Stomach (tissue), 19 donors: ENCODE measurements at regions of chr1 and their contacts with region 1.

Region 1: GRCh38 chr1:181189691-181190363 is 101.3 kb downstream of the IER5 start:
- DNase-seq: peak; percentile 82 to 90
- H3K4me3 ChIP-seq: peak overlapping the region; percentile 19 to 45 (median 32)
- H3K27ac ChIP-seq: no peak overlapping the region
- H3K4me1 ChIP-seq: peaks cover 8 to 11% (median 11%) of the 10 kb centered on the region in 4 donors
- H3K27me3 ChIP-seq: peaks cover 0 to 38% (median 0%) of the 10 kb centered on the region in 3 donors
- CTCF ChIP-seq: peak in 5 of 7 experiments; percentile 81 to 99 (median 98)
- EP300 ChIP-seq: no peak
- POLR2A ChIP-seq: no peak

Region 2: GRCh38 chr1:180994262-180994661 is 195.6 kb before region 1 on chr1:
- intact Hi-C with region 1: no loop called
- DNase-seq: no peak
- H3K4me3 ChIP-seq: no peak overlapping the region
- H3K27ac ChIP-seq: no peak overlapping the region
- H3K4me1 ChIP-seq: peaks cover 0 to 6% (median 3%) of the 10 kb centered on the region in 4 donors
- H3K27me3 ChIP-seq: no peaks in the 10 kb centered on the region
- CTCF ChIP-seq: no peak
- EP300 ChIP-seq: no peak
- POLR2A ChIP-seq: no peak

Region 3: DNA sequence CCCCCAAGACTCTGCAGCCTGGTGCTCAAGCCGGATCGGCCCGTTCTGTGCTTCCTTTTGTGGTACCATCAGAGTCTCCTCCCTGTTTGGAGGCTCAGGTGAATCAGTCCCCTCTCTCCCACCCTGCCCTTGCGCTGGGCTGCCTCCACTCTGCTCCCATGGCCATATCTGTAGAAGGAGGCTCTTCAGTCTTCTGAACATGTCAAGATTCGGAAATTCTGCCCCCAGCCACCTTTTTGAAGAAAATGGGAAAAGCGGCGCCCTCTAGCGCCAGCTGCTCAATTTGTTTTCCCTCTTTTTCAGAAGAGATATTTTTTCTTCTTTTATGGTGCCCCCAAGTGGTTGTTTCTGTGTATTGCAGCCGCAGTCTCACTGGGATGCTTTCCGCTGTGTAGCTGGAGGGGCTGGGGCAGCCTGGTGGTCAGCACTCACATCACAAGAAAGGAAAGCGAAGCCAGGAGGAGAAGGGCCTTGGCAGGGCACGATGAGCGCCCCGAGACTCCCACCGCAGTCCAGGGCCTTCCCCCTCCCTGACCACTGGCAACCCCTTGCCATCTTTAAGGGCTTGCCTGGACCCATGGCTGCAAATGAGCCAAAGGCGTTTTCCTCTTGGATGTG is 235.1 kb after region 1 on chr1:
- intact Hi-C with region 1: loop called (anchors 5 kb)
- DNase-seq: peak; percentile 77 to 88
- H3K4me3 ChIP-seq: no peak overlapping the region
- H3K27ac ChIP-seq: no peak overlapping the region
- H3K4me1 ChIP-seq: peaks cover 0 to 8% (median 3%) of the 10 kb centered on the region in 4 donors
- H3K27me3 ChIP-seq: peaks cover 0 to 50% (median 3%) of the 10 kb centered on the region in 3 donors
- CTCF ChIP-seq: peak in 5 of 7 experiments; percentile 90 to 95 (median 95)
- EP300 ChIP-seq: no peak
- POLR2A ChIP-seq: no peak